Naive thymus-derived CD4-positive, alpha-beta T cell (primary cell): ENCODE measurements at regions of chr4 and their contacts with region 1.

Region 1: DNA sequence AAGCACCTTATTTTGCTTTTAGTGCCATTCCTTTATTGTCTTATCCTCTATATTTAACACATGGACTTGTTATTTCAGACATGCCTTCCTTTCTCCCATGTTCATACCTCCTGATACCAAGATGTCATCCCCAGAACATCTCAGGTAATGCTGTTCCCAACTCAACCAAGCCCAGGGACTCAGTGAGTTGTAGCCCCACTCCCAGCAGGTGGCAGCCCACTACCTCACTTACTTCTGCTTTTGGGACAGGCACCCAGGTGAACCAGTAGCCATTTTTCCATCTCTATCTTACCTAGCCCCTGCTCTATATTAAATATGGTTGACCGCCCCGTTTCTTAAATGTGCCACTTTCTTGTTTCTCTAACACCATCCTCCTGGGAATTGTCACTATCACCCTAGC is 199.0 kb downstream of the DCHS2 start:
- DNase-seq: peak in 1 of 9 donors; percentile 2
- ATAC-seq: no peak
- H3K4me3 ChIP-seq: no peak overlapping the region
- H3K4me3 Mint-ChIP-seq: no peak overlapping the region
- H3K27ac ChIP-seq: no peak overlapping the region
- H3K27ac Mint-ChIP-seq: no peak overlapping the region
- H3K4me1 ChIP-seq: no peaks in the 10 kb centered on the region
- H3K4me1 Mint-ChIP-seq: no peaks in the 10 kb centered on the region
- H3K27me3 ChIP-seq: no peaks in the 10 kb centered on the region
- H3K27me3 Mint-ChIP-seq: peaks cover 3 to 27% (median 12%) of the 10 kb centered on the region in 5 donors

Region 2: GRCh38 chr4:154421618-154422017 is 129.0 kb after region 1 on chr4:
- CTCF ChIA-PET with region 1: no interaction called
- POLR2A ChIA-PET with region 1: no interaction called
- intact Hi-C with region 1: no loop called
- DNase-seq: no peak
- ATAC-seq: no peak
- H3K4me3 ChIP-seq: no peak overlapping the region
- H3K4me3 Mint-ChIP-seq: no peak overlapping the region
- H3K27ac ChIP-seq: no peak overlapping the region
- H3K27ac Mint-ChIP-seq: no peak overlapping the region
- H3K4me1 ChIP-seq: no peaks in the 10 kb centered on the region
- H3K4me1 Mint-ChIP-seq: peaks cover 2 to 10% (median 9%) of the 10 kb centered on the region in 7 donors
- H3K27me3 ChIP-seq: no peaks in the 10 kb centered on the region
- H3K27me3 Mint-ChIP-seq: peaks cover 19 to 37% (median 32%) of the 10 kb centered on the region in 5 donors

Region 3: GRCh38 chr4:154506253-154506652 is 213.7 kb after region 1 on chr4:
- CTCF ChIA-PET with region 1: no interaction called
- POLR2A ChIA-PET with region 1: no interaction called
- intact Hi-C with region 1: loop called in 1 of 2 experiments (anchors 5 kb)
- DNase-seq: peak in 2 of 9 donors; percentile 4 to 24
- ATAC-seq: no peak
- H3K4me3 ChIP-seq: no peak overlapping the region
- H3K4me3 Mint-ChIP-seq: no peak overlapping the region
- H3K27ac ChIP-seq: no peak overlapping the region
- H3K27ac Mint-ChIP-seq: no peak overlapping the region
- H3K4me1 ChIP-seq: no peaks in the 10 kb centered on the region
- H3K4me1 Mint-ChIP-seq: no peaks in the 10 kb centered on the region
- H3K27me3 ChIP-seq: peaks cover 0 to 4% of the 10 kb centered on the region in 2 donors
- H3K27me3 Mint-ChIP-seq: peaks cover 22 to 47% (median 30%) of the 10 kb centered on the region in 5 donors